ENCODE measurements at regions of chr3 and their contacts with region 1.

Region 1: DNA sequence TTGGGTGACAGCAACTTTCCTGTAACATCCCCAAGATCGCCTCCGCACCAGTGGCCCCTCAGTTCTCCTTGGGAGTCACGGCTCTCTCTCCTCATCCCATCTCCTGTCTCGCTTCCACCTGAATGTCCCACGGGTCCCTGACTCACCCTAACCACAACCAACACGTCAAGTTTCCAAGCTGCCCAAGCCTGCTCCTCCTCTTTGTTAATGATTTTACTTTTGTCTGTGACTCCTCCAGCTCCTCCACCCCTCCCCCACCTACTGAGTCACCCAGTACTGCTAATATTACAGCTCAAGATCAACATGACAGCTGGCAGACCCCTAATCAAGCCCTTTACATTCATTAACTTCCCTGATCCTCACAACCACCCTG is 39.3 kb downstream of the BDH1 start:
- DNase-seq: no peak
- ATAC-seq: no peak

Region 2: DNA sequence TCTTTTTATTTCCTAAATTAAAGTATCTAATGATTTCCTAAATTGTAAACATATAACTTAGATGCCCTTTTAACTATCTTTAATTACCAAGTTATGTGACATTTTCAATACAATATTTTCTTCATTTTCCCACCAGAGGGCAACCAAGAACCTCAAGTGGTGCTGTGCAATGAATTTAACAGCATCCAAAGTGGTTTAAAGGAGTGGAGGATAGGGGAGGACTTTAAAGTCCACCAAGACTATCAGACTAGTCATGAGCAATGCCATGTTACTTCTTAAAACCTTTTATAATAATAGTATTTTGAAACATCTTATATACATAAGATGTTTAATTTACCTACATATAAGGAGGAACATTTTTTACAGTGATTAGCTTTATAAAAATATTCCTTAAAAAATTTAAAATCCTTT is 292.5 kb before region 1 on chr3:
- intact Hi-C with region 1: loop called (anchors 10 kb)
- DNase-seq: no peak
- ATAC-seq: peak; percentile 49

Measured in Right ventricle myocardium superior (tissue), 1 donor.